Endothelial cell of umbilical vein (primary cell): ENCODE measurements at regions of chr9 and their contacts with region 1.

Region 1: DNA sequence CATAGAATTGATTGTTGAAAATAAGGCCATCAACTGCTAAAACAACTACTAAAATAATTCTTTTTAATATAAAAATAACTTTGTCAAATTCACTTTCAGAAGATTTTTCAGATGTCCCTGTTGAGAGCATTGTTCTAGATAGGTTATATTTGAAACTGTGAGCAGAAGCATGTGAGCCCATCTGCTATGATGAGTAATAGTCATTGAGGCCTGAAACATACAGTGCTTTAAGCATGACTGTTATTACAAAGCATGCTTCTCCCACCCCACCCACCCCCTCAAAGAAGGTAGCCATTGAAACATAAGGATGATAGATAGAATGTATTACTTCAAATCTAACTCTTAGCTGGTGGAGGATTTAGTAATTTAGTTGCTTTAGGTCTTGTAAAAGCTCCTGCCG is 86.0 kb downstream of the UHRF2 start:
- DNase-seq: no peak
- H3K4me3 ChIP-seq: no peak overlapping the region
- H3K27ac ChIP-seq: no peak overlapping the region
- H3K4me1 ChIP-seq: peaks cover 3% of the 10 kb centered on the region
- H3K27me3 ChIP-seq: no peaks in the 10 kb centered on the region
- CTCF ChIP-seq: no peak
- POLR2A ChIP-seq: no peak

Region 2: GRCh38 chr9:6449645-6450044 is 49.3 kb before region 1 on chr9:
- CTCF ChIA-PET with region 1: no interaction called
- POLR2A ChIA-PET with region 1: no interaction called
- dilution Hi-C with region 1: no loop called
- intact Hi-C with region 1: no loop called
- DNase-seq: peak; percentile 42
- H3K4me3 ChIP-seq: no peak overlapping the region
- H3K27ac ChIP-seq: peak overlapping the region; percentile 66
- H3K4me1 ChIP-seq: peaks cover 38% of the 10 kb centered on the region
- H3K27me3 ChIP-seq: no peaks in the 10 kb centered on the region
- CTCF ChIP-seq: no peak
- POLR2A ChIP-seq: no peak

Region 3: DNA sequence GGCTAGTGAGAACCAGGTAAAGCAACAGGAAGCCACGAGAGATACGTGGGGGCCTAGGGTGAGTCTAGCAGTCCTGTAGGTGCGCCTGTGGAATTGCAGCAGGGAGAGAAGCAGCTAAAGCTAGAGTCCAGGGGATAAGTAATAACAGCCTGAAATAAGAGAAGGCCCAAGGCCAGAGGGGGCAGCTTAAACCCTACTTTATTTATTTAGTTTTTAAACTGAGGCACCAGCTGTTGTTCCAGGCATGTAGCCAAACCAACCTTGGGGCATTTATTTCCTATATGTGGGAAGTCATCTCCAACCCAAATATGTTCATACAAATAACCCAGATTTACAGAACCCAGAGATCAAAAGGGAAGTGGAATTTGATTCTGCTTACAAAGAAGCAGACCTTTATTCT is 53.1 kb after region 1 on chr9:
- CTCF ChIA-PET with region 1: interaction called, 10 read pairs
- POLR2A ChIA-PET with region 1: no interaction called
- dilution Hi-C with region 1: no loop called
- intact Hi-C with region 1: no loop called
- DNase-seq: peak; percentile 92
- H3K4me3 ChIP-seq: peak overlapping the region in 1 of 3 experiments; percentile 58
- H3K27ac ChIP-seq: peak overlapping the region; percentile 99
- H3K4me1 ChIP-seq: peaks cover 42% of the 10 kb centered on the region
- H3K27me3 ChIP-seq: no peaks in the 10 kb centered on the region
- CTCF ChIP-seq: peak in 1 of 2 donors; percentile 45
- POLR2A ChIP-seq: peak; percentile 19